ENCODE measurements at regions of chr9 and their contacts with region 1.

Region 1: DNA sequence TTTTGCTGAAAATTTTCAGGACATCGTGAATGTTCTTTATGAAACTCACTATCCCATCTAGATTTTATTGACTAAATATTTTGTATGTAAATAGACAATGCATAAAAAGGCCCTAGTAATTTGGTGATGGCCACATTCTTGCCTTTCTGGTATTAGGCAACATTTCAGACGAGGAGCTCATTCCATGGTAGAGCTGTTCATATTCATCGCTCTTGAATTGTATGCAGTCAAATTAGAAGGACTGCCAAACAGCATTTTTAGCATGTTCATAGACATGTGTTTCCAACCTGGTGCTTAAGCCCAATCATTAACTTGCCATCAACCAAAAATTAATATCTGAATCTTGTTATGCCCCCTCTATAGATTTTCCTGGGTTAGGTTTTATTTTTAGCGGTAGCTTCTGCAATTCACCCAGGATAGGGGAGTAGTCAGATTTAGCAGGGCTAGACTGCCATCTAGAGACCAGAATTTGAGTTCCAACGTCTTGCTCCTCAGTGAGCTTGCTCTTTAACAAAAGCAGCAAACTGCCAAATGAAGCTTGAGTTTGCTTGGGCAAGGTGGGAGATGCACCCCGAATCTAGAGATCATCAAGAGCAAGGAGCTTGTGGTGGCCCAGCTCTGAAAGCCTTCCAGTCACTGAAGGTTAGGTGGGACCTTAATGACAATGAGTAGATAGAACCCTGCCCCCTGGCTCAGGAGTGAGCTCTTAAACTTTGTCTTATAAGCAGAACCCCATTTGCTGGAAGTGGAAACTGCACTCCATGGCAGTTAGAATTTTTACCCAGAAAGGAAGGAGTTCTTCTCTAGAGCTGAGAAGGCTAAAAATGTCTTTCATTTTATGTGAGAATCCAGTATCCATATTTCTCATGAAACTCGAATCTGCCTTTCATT is 456.2 kb downstream of the RASEF start:
- DNase-seq: no peak
- ATAC-seq: peak; percentile 85

Region 2: GRCh38 chr9:82367055-82367454 is 239.7 kb before region 1 on chr9:
- intact Hi-C with region 1: no loop called
- DNase-seq: no peak
- ATAC-seq: no peak

Region 3: DNA sequence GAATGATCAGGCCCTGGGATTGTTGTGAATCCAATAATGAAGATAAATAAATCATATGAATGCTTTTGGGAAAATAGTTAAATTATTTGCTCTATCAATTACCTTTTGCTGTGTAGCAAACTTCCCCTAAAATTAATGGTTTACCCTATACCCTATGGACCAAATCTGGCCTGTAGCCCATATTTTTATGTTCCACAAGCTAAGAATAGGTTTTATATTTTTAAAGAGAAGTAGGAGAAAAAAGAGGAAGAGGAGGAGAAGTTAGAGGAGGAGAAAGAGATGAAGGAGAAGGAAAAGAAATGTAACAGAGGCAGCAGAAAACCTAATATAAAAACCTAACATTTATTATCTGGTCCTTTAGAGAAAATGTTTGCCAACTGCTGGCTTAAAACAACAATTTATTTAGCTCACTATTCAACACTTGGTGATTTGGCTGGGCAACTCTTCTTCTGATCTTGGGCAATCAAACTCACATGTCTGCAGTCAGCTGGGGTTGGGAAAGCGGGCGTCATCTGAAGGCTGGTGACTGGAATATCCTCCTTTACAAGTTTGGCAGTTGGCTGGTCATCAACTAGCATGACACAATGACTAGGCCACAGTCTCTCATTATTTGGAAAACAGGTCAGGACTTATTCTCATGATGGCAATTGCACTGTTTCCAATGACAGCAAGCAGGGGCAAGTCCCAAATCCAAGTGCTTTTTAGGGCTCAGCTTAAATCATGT is 66.7 kb before region 1 on chr9:
- intact Hi-C with region 1: loop called (anchors 5 kb)
- DNase-seq: peak; percentile 36
- ATAC-seq: no peak

Region 4: GRCh38 chr9:82829818-82830217 is 223.1 kb after region 1 on chr9:
- intact Hi-C with region 1: no loop called
- DNase-seq: no peak
- ATAC-seq: no peak

Measured in Right ventricle myocardium superior (tissue), 1 donor.